ENCODE measurements at regions of chr2 and their contacts with region 1.

Region 1: DNA sequence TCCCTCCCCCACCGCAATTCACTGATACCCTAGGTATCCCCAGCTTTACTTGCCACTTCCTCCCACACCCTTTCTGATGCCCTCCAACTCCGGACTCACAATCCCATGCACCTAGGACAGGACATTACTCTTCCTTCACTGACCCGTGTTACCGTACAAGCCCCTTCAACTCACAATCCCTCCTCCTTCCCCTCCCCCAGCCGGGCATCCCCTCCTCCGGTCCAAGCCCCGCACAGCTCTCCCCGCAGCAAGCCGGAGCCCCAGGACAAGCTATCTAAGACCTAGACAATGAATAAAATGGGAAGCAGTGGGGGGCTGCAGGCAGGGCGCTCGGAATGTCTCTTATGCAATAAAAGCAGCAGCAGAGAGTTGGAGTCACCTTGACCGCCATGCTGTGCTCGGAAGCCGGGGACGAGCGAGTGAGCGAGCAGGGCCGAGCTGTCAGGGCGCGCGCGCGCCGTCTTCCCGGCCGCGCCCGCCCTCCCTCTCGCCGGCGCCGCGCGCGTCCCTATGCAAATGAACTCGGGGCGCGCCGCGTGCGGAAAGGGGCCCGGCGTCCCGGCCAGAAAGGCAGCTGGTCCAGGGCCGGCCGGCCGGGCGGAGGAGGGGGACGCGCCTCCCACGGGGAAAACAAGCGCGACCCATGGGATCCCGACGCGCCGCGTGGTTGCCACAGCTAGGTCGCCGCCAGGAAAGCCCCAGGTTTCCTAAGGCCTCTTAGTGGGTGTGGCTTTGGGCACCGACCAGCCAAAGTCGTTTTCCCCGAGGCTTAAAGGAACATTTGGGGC is at the start of gene SLC25A12:
- DNase-seq: peak; percentile 78
- H3K4me3 Mint-ChIP-seq: peak within 1 kb of the TSS; percentile 100
- H3K27ac Mint-ChIP-seq: peak within 1 kb of the TSS; percentile 94
- H3K4me1 Mint-ChIP-seq: peaks cover 42% of the 10 kb centered on the region
- H3K27me3 Mint-ChIP-seq: no peaks in the 10 kb centered on the region
- total RNA-seq, gene SLC25A12: 15.0 to 17.4 TPM

Region 2: GRCh38 chr2:171999604-172000469 is 105.8 kb after region 1 on chr2 and contains the start of gene METAP1D:
- CTCF ChIA-PET with region 1: no interaction called
- intact Hi-C with region 1: loop called (anchors 1 kb)
- DNase-seq: peak; percentile 88
- H3K4me3 Mint-ChIP-seq: peak within 1 kb of the TSS; percentile 94
- H3K27ac Mint-ChIP-seq: peak within 1 kb of the TSS; percentile 89
- H3K4me1 Mint-ChIP-seq: peaks cover 25% of the 10 kb centered on the region
- H3K27me3 Mint-ChIP-seq: no peaks in the 10 kb centered on the region
- total RNA-seq, gene METAP1D: 2.5 to 3.4 TPM

Region 3: DNA sequence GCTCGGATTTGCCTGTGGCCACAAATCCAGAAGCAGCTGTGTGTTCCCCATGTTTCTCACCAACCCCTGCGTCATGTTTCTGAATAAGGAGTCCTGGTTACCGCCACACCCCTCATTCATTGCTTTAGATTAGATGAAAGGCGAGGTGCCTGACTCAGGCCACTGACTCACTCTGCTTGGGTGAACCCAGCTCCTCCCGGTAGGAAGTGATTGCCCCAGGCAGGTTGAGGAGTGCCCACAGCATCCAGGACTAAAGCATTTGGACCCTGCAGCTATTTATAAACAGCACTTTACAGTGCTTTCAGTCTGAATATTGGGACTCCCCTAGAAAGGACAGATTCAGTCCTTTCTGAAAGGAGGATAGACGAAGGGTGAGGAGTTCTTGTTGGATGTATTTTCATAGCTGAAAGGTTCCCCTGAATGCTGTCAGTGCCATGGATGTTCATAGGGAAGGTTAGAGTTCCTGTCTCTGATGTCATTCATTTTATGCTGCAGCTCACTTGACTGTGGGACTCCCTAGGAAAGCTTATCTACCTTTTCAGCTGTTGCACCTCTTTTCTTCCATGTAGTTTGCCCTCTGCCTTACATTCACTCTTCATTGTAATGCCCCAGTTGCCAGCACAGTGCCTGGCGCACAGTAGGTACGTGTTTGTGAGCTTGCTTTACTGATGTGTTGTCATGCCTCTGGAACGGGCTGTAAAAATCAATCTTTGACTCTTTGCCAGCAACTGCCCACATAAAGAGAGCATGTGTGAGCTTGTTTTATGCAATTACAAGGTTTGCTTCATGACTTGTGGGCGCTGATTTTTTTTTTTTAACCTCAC is 548.3 kb after region 1 on chr2:
- CTCF ChIA-PET with region 1: no interaction called
- intact Hi-C with region 1: loop called (anchors 10 kb)
- DNase-seq: peak; percentile 87
- H3K4me3 Mint-ChIP-seq: peak overlapping the region; percentile 58
- H3K27ac Mint-ChIP-seq: no peak overlapping the region
- H3K4me1 Mint-ChIP-seq: peaks cover 69% of the 10 kb centered on the region
- H3K27me3 Mint-ChIP-seq: no peaks in the 10 kb centered on the region